ENCODE measurements at regions of chr16 and their contacts with region 1.

Region 1: DNA sequence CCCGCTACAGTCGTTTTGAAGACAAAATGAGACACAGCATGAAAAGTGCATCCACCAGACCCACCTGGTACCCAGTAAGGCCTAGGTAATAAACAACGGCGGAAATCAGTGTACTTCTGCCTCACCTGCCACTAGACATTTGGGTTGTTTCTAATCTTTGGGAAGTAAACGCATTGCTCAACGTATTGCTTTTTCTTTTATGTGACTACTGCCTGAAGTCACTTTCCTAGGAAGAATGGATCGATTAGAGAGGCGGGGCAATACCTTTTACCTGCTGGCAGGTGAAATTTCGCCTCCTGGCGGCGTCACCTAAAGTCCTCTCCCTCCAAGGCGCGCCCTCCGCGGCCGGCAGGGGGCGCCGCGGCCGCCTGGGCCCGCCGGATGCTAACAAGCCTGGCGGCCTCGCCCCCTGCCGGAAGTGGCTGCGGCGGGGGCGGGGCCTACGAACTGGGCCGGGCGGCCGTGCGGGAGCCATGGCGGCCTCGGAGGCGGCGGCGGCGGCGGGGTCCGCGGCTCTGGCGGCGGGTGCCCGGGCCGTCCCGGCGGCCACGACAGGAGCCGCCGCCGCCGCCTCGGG is at the start of gene ATMIN:
- DNase-seq: peak; percentile 89
- H3K4me3 Mint-ChIP-seq: peak within 1 kb of the TSS; percentile 79
- H3K27ac Mint-ChIP-seq: no peak within 1 kb of the TSS
- H3K4me1 Mint-ChIP-seq: peaks cover 21% of the 10 kb centered on the region
- H3K27me3 Mint-ChIP-seq: no peaks in the 10 kb centered on the region
- total RNA-seq, gene ATMIN: 19.3 to 21.3 TPM

Region 2: DNA sequence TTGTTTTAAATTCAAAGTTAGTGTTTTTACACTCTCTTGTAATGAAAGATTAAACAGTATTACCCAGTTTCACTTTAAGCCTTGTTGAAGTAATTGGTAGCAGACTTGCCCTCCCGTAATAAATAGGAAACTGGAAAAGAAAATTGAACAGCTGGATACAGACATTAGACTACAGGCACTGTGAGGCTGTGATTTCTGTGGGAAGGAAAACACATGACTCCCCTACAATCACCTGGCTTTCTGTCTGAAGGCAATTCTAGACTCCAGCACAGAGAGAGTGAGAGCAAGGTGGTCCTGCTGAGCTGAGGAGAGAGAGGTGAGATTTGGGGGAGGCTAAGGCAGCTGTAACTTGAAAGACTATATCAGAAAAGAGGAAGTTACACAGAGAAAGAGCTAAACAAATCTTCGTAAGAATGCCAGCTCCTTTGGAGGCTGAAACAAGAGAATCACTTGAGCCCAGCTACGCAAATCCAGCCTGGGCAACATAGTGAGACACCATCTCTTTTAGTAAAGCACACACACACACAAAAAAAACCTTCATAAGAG is 173.3 kb before region 1 on chr16:
- CTCF ChIA-PET with region 1: no interaction called
- POLR2A ChIA-PET with region 1: no interaction called
- intact Hi-C with region 1: no loop called
- DNase-seq: no peak
- H3K4me3 Mint-ChIP-seq: no peak overlapping the region
- H3K27ac Mint-ChIP-seq: no peak overlapping the region
- H3K4me1 Mint-ChIP-seq: no peaks in the 10 kb centered on the region
- H3K27me3 Mint-ChIP-seq: peaks cover 22% of the 10 kb centered on the region

Region 3: GRCh38 chr16:80964351-80964750 is 71.1 kb before region 1 on chr16:
- CTCF ChIA-PET with region 1: no interaction called
- POLR2A ChIA-PET with region 1: no interaction called
- intact Hi-C with region 1: no loop called
- DNase-seq: no peak
- H3K4me3 Mint-ChIP-seq: no peak overlapping the region
- H3K27ac Mint-ChIP-seq: no peak overlapping the region
- H3K4me1 Mint-ChIP-seq: peaks cover 8% of the 10 kb centered on the region
- H3K27me3 Mint-ChIP-seq: no peaks in the 10 kb centered on the region

Region 4: GRCh38 chr16:81006814-81007696 is 28.4 kb before region 1 on chr16 and contains the starts of genes CENPN and CMC2:
- CTCF ChIA-PET with region 1: interaction called, 139 read pairs
- POLR2A ChIA-PET with region 1: interaction called, 8 read pairs
- intact Hi-C with region 1: loop called (anchors 1 kb)
- DNase-seq: peak; percentile 98
- H3K4me3 Mint-ChIP-seq: peak within 1 kb of the TSS; percentile 88
- H3K27ac Mint-ChIP-seq: peak within 1 kb of the TSS; percentile 98
- H3K4me1 Mint-ChIP-seq: peaks cover 41% of the 10 kb centered on the region
- H3K27me3 Mint-ChIP-seq: no peaks in the 10 kb centered on the region
- total RNA-seq, gene CENPN: 71.9 to 76.0 TPM
- total RNA-seq, gene CMC2: 147 to 148 TPM

Region 5: DNA sequence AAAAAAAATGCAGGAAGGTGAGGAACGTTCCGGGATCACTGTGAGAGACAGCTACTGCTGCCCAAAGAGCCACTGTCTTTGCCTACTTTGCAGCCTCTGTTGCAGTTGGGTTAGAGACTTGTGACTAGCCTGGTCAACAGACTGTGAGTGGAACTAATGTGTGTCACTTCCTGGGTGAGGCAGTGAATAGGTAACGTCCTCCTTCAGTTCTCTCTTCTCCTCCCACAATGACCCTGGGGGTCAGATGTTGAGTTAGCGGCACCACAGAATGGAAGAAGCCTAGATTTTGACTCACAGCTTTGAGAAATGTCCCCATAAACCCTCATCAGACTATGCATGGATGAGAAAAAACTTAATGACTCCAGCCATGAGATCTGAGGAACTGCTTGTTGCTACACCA is 36.3 kb after region 1 on chr16:
- CTCF ChIA-PET with region 1: interaction called, 68 read pairs
- POLR2A ChIA-PET with region 1: interaction called, 11 read pairs
- intact Hi-C with region 1: loop called (anchors 1 kb)
- DNase-seq: no peak
- H3K4me3 Mint-ChIP-seq: no peak overlapping the region
- H3K27ac Mint-ChIP-seq: no peak overlapping the region
- H3K4me1 Mint-ChIP-seq: no peaks in the 10 kb centered on the region
- H3K27me3 Mint-ChIP-seq: no peaks in the 10 kb centered on the region

Region 6: DNA sequence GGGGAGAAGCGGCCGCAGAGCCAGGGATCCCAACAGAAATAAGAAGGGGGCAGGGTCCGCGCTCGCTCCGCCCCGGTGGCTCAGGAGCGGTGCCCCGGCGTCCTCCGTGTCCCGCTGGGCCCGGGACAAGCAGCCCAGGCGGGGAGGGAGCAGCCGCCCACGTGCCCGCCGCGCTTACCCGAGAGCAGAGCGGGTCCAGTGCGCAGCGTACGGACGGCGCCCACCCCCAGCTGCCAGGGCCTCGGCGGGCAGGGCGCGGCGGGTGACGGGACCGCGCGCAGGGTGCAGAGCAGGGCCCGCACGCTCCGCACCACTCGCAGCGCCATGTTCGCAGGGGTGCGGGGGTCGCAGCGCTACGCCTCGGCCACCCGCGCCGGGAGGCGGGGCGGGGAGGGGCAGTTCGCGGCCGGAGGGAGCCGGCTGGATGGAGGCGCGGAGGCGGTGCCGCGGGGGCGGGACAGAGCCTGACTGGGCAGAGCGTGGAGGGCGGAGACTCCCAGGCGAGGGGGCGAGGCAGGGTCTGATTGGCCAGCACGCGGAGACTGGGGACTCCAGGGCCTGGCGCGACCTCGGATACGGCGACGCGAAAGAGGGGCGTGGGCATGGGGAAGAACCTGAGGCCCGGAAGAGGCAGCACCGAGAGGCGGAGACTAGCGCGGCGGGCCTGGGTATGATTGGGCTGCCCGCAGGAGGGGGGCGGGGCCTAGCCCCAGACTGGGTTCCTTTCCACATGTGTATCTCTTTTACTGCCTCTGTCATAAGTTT is 60.6 kb after region 1 on chr16 and contains the start of gene GCSH:
- CTCF ChIA-PET with region 1: interaction called, 5 read pairs
- POLR2A ChIA-PET with region 1: no interaction called
- intact Hi-C with region 1: loop called (anchors 1 kb)
- DNase-seq: peak; percentile 99
- H3K4me3 Mint-ChIP-seq: peak within 1 kb of the TSS; percentile 79
- H3K27ac Mint-ChIP-seq: peak within 1 kb of the TSS; percentile 70
- H3K4me1 Mint-ChIP-seq: peaks cover 14% of the 10 kb centered on the region
- H3K27me3 Mint-ChIP-seq: no peaks in the 10 kb centered on the region
- total RNA-seq, gene GCSH: 23.9 to 24.7 TPM